Motor neuron (in vitro differentiated cells): ENCODE measurements at regions of chr19 and their contacts with region 1.

Region 1: DNA sequence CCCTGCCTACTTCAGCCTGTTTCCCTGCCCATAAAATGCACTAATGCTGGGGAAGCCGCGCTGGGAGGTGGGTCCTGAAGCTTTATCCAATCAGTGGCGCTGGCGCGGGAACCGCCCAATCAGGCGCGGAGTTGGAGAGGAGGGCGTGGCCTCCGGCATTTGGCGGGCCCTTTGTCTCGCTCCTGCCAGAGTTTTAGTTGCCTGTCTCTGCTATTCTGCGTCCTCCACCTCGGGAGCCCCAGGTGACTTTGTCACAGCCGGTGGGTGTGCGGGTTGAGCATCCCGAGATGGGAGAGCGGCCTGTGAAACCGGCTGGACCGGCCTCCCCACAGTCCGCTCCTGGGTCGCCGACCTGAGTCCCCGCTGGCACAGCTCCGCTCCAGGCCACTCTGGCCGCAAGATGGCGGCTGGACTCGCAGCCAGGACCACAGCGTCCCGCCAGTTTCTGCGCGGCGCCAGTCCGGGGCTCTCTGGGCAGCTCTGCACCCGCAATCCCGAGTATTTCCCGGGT is 30.7 kb upstream of the ZNF429 start:
- ATAC-seq: peak in 5 of 8 experiments; percentile 71 to 100 (median 87)
- H3K4me3 ChIP-seq: peak overlapping the region in 2 of 5 donors; percentile 41 to 44
- H3K27ac ChIP-seq: no peak overlapping the region
- H3K4me1 ChIP-seq: no peaks in the 10 kb centered on the region

Region 2: DNA sequence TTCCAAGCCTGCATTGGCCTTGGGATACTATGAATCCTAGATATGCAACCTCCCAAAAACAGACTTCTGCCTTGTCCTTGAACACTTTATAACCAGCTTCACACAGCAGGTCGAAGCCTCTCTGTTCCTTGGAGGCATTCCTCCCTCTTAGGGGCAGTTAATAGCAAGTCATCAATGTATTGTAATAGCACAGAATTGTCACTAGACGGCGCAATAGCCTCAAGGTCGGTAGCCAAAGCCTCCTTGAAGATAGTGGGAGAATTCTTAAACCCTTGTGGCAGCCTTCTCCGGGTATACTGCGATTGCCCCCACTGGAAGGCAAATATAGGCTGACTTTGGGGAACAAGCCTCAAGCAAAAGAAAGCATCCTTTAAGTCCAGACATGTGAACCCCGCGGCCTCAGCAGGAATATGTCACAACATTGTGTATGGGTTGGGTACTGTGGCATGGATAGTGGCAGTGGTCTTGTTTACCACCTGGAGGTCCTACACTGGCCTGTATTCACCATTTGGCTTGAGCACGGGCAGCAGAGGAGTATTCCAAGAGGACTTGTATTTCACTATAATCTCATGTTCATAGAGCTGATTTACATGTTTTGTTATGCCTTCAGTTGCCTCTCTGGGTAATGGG is 271.7 kb before region 1 on chr19:
- in situ Hi-C with region 1: loop called in 1 of 9 experiments (anchors 25 kb)
- ATAC-seq: peak in 5 of 8 experiments; percentile 24 to 73 (median 67)
- H3K4me3 ChIP-seq: no peak overlapping the region
- H3K27ac ChIP-seq: no peak overlapping the region
- H3K4me1 ChIP-seq: no peaks in the 10 kb centered on the region

Region 3: DNA sequence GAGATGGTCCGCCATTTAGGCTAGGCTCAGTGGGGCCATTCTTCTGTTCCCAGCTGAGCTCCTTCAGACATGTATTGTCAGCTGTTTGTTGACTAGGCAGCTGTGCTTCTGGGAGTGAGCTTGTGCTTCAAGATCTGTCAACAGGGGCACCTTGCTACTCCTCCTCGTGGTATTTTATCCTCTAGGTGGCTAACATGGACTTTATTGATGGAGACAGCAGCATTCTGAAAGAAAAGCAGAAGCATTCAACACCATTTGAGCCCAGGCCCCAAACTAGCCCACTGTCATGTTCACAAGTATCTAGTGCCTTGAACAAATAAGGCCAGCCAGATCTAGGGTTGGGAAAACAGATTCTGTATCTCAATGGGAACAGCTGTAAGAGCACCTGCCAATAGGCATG is 96.6 kb after region 1 on chr19:
- in situ Hi-C with region 1: no loop called
- ATAC-seq: no peak
- H3K4me3 ChIP-seq: no peak overlapping the region
- H3K27ac ChIP-seq: no peak overlapping the region
- H3K4me1 ChIP-seq: no peaks in the 10 kb centered on the region

Region 4: DNA sequence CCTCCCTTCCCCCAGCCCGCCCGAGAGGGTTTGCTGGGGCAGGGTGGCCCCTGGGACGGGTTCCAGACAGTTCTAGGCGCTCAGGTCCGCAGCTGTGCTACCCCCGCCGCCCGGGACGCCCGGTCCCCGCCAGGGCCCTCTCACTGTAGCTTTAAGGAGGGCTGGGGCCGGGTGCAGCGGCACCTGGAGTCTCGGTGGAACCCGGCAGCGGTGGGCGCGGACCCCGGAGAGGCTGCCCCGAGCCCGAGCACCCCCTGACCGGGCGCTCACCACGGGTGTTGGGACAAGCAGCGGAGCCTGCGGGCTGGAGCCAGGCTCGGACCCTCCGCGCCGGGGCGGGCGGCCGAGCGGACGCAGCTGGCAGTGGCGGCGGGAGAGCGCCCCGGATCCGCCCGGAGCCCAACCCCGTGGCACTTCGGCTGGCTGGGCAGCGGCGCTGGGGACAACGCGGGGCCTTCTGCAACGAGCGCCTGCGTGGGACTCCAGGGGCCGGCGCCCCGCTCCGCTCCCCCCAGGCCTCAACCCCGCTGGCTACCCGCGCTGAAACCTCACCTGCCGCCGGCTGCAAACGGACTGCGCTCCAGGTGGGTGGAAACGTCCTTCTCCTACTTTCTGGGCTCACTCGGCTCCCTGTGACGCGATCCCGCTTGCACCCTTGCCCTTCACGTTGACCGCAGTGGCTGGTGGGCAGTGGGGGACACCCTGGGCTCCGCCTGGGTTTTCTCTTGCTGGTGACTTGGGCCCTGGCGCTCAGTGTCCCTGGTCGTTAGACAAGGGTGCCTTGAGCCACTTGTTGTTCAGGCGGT is 111.8 kb after region 1 on chr19:
- in situ Hi-C with region 1: no loop called
- ATAC-seq: peak in 4 of 8 experiments; percentile 42 to 67 (median 56)
- H3K4me3 ChIP-seq: peak overlapping the region in 3 of 5 donors; percentile 18 to 30 (median 26)
- H3K27ac ChIP-seq: no peak overlapping the region
- H3K4me1 ChIP-seq: no peaks in the 10 kb centered on the region